ENCODE measurements at regions of chr14 and their contacts with region 1.

Region 1: GRCh38 chr14:36383674-36384431 is 63.4 kb upstream of the MBIP start:
- DNase-seq: peak; percentile 39 to 85
- ATAC-seq: peak; percentile 99 to 100 (median 100)
- H3K4me3 ChIP-seq: no peak overlapping the region
- H3K27ac ChIP-seq: peak overlapping the region; percentile 86
- H3K4me1 ChIP-seq: peaks cover 19% of the 10 kb centered on the region
- H3K27me3 ChIP-seq: no peaks in the 10 kb centered on the region
- CTCF ChIP-seq: no peak

Region 2: GRCh38 chr14:35861204-35861868 is 522.5 kb before region 1 on chr14:
- intact Hi-C with region 1: no loop called
- DNase-seq: no peak
- ATAC-seq: no peak
- H3K4me3 ChIP-seq: no peak overlapping the region
- H3K27ac ChIP-seq: no peak overlapping the region
- H3K4me1 ChIP-seq: no peaks in the 10 kb centered on the region
- H3K27me3 ChIP-seq: no peaks in the 10 kb centered on the region
- CTCF ChIP-seq: no peak

Region 3: DNA sequence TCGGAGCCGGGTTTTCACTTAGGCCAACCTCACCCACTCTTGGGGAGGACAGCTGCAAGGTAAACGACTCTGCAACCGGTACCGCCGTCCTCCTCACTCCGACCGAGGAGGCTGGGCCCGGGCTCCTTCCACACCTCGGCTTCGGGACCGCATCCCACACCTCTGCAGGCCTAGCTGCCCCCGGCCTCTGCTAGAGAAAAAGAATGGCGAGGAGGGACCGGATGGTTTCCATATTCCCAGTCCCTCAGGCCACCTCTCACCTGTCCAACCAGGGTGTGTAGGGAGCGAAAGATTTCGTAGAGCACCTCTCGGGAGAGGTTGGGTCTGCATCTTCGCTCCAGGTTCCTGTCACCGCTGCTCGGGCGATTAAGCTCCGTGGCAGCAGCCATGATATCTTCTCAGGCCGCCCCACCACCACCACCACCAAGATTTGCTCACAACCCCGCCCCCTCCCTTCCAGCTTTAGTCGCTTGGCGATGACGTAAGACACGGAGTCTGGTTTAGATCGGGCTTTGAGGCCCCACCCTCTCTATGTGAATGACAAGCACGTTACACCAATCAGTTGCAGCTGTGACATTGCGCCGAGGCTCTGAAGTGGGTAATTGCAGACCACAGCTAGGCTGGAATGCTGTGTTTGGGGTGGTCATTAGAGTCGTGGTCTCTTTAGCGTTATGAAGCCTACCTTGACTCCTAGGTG is 63.5 kb before region 1 on chr14 and contains the start of gene MBIP:
- intact Hi-C with region 1: loop called in 1 of 2 experiments (anchors 5 kb)
- DNase-seq: peak; percentile 87 to 91
- ATAC-seq: peak; percentile 99 to 100 (median 100)
- H3K4me3 ChIP-seq: peak within 1 kb of the TSS; percentile 93
- H3K27ac ChIP-seq: peak within 1 kb of the TSS; percentile 85
- H3K4me1 ChIP-seq: peaks cover 28% of the 10 kb centered on the region
- H3K27me3 ChIP-seq: peaks cover 0 to 3% (median 2%) of the 10 kb centered on the region in 3 donors
- CTCF ChIP-seq: no peak
- total RNA-seq, gene MBIP: 6.0 to 6.5 (median 6.3) TPM

Region 4: GRCh38 chr14:36424478-36425102 is 40.7 kb after region 1 on chr14:
- intact Hi-C with region 1: loop called in 1 of 2 experiments (anchors 5 kb)
- DNase-seq: no peak
- ATAC-seq: peak in 2 of 4 donors; percentile 27 to 41
- H3K4me3 ChIP-seq: no peak overlapping the region
- H3K27ac ChIP-seq: peak overlapping the region; percentile 54
- H3K4me1 ChIP-seq: peaks cover 29% of the 10 kb centered on the region
- H3K27me3 ChIP-seq: no peaks in the 10 kb centered on the region
- CTCF ChIP-seq: no peak